Activated naive CD4-positive, alpha-beta T cell treated with anti-CD3 and anti-CD28 coated beads for 36 hours (primary cell): ENCODE measurements at regions of chr3 and their contacts with region 1.

Region 1: DNA sequence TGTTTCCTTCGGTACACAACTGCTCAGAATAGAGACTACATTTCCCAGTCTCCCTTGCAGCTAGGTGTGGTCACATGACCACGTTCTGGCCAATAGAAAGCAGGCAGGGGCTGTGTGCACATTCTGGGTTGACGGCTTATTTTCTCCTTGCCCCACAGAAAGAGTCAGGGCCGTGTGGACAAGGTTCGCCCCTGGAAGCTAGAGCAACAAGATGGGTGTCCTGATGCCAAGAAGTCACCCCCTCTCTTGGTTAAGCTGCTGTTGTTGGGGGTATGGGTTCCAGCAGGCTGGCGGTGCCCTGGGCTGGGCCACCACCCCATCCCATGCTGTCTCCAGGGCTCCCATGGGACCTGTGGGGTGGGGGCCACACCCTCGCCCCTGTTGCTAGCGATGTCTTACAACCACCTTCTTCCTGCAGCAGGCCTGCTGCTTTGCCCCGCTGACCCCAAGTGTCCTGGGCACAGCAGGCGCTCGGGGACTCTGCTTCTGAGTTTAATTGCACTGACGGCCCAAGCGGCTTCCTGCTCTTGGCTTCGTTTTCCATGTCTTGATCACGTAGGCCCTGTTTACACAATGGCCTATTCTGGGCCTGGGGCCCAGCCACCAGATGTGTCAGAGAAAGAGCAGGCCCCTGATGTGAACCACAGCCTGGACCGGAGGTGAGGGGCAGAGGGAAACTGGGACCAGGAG is 24.9 kb downstream of the ABTB1 start:
- DNase-seq: peak; percentile 60
- H3K4me3 Mint-ChIP-seq: no peak overlapping the region
- H3K27ac Mint-ChIP-seq: no peak overlapping the region
- H3K4me1 Mint-ChIP-seq: no peaks in the 10 kb centered on the region
- H3K27me3 Mint-ChIP-seq: no peaks in the 10 kb centered on the region

Region 2: DNA sequence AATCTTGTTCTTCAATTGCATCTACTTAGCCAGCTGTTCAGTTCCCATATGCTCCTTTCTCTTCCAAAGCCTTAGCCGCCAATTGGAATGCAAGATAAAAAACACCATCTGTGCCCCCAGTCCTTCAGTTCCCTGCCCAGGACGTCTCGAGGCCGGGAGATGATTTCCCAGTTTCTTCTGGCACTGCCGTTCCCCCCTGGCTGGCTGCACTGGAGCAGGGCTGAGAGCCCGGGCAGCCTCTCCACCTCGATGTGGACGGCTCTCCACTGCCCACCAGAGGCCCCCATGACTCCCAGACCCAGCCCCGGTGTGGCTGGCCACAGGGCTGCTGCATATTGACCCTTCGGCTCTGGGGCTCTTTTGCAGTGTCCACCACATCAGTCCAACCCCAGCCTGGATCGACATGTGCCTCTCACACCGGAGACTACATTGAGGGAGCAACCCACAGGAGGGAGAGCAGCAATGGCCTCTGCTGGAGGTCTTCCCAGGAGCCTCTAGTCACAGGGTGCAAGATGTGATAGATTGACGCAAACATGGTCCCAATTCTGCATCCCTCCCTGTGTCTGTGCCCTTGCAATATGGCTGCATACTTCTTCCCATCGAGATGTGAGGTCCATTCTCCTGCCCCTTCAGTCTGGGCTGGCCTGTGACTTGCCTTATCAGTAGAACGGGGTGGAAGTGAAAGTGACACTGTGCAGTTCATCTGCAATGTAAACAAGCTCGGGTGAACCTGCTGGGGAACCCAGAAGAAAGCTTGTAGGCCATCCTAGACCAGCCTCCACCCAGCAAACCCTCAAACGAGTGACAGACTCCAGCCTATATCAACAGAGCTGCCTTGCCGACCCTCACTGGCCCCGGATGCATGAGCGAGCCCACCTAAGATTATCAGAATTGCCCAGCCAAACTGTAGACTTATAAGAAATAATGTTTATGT is 357.5 kb before region 1 on chr3:
- CTCF ChIA-PET with region 1: no interaction called
- intact Hi-C with region 1: no loop called
- DNase-seq: no peak
- H3K4me3 Mint-ChIP-seq: no peak overlapping the region
- H3K27ac Mint-ChIP-seq: no peak overlapping the region
- H3K4me1 Mint-ChIP-seq: no peaks in the 10 kb centered on the region
- H3K27me3 Mint-ChIP-seq: peaks cover 35% of the 10 kb centered on the region

Region 3: GRCh38 chr3:127598841-127599570 is 98.7 kb before region 1 on chr3:
- CTCF ChIA-PET with region 1: interaction called, 3 read pairs
- intact Hi-C with region 1: loop called (anchors 5 kb)
- DNase-seq: no peak
- H3K4me3 Mint-ChIP-seq: peak overlapping the region; percentile 84
- H3K27ac Mint-ChIP-seq: peak overlapping the region; percentile 89
- H3K4me1 Mint-ChIP-seq: peaks cover 40% of the 10 kb centered on the region
- H3K27me3 Mint-ChIP-seq: no peaks in the 10 kb centered on the region

Region 4: GRCh38 chr3:127652231-127652995 is 45.3 kb before region 1 on chr3:
- CTCF ChIA-PET with region 1: interaction called, 6 read pairs
- intact Hi-C with region 1: loop called (anchors 1 kb)
- DNase-seq: no peak
- H3K4me3 Mint-ChIP-seq: no peak overlapping the region
- H3K27ac Mint-ChIP-seq: no peak overlapping the region
- H3K4me1 Mint-ChIP-seq: no peaks in the 10 kb centered on the region
- H3K27me3 Mint-ChIP-seq: no peaks in the 10 kb centered on the region

Region 5: GRCh38 chr3:127970966-127971592 is 273.4 kb after region 1 on chr3:
- CTCF ChIA-PET with region 1: interaction called, 3 read pairs
- intact Hi-C with region 1: loop called (anchors 2 kb)
- DNase-seq: peak; percentile 31
- H3K4me3 Mint-ChIP-seq: no peak overlapping the region
- H3K27ac Mint-ChIP-seq: no peak overlapping the region
- H3K4me1 Mint-ChIP-seq: no peaks in the 10 kb centered on the region
- H3K27me3 Mint-ChIP-seq: peaks cover 14% of the 10 kb centered on the region